ENCODE measurements at regions of chr10 and their contacts with region 1.

Region 1: DNA sequence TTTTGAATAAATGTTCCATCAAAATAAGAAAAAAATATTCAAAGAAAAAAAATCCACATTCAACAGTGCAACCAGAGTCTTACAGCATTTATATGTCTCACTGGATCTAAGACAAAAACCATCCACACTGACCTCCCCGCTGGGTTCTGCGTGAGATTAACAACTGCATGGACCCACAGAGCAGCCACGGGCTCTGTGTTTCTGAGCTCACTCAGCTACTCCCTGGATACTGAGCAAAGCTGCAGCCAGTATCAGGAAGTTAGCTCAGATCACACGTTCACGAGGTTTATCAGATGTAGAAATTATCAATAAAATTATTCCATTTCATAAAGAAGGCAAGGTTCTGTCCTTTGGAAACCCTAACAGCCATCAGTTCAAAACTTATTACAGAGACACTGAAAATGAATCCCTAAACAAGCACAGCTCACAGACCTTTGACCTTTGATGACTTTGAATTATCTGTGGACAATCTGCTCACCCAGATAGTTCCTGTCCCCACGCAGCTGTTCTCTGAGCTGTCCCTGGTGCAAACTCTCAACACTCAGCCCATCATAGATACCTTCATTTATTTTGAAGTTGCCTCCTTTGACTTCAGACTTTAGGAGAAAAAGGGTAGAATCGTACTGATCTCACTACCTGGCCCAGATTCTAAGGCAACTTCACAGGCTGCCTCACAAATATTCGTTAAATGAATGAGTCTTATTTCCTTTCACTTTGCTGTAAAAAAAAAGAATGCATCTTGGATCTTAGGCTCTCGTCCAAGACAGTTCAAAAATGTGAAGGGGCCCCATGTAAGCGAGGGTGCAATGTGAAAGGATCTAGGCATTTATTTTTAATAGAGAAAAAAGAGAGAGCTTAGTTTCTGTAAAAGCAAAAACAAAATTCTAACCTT is 67.7 kb upstream of the SVIL start:
- DNase-seq: peak in 3 of 5 donors; percentile 6 to 17 (median 14)
- H3K4me3 ChIP-seq: no peak overlapping the region
- H3K4me3 Mint-ChIP-seq: peak overlapping the region; percentile 32 to 88 (median 68)
- H3K27ac ChIP-seq: peak overlapping the region; percentile 43
- H3K27ac Mint-ChIP-seq: peak overlapping the region; percentile 58 to 94 (median 81)
- H3K4me1 ChIP-seq: peaks cover 17% of the 10 kb centered on the region
- H3K4me1 Mint-ChIP-seq: peaks cover 36 to 68% (median 46%) of the 10 kb centered on the region in 4 donors
- H3K27me3 ChIP-seq: no peaks in the 10 kb centered on the region
- H3K27me3 Mint-ChIP-seq: no peaks in the 10 kb centered on the region

Region 2: DNA sequence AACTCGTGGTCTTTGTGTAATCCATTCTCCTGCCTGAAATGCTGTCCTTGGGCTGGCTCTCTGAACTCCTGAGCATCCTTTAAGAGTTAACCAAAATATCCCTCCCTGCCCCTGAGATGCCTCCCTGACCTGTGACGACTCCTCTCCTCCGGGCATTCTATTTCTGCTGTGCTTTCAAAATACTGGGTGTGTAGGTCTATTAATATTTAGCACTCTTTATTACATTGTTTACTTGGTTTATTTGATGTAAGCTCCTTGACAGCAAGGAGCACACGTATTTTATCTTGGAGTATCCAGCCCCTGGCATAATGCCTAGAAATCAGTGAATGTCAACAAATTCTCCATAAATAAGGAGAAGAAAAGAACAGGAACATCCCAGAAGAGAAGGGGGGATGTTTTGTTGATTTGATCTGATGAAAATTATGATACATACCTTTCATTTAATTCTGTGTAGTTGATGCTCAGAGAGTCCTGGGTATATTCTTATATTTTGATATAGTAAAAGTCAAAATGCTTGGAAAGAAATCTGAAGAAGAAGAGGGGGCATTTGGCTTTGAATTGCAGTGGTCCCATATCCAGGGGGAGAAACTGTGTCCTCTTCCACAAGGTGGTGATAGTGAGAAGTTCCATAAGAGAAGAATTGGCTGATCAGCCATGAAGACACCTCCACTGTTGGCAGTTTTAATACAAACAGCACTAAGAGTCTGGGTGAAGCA is 1291.9 kb before region 1 on chr10:
- CTCF ChIA-PET with region 1: no interaction called
- POLR2A ChIA-PET with region 1: no interaction called
- intact Hi-C with region 1: no loop called
- DNase-seq: no peak
- H3K4me3 ChIP-seq: no peak overlapping the region
- H3K4me3 Mint-ChIP-seq: no peak overlapping the region
- H3K27ac ChIP-seq: no peak overlapping the region
- H3K27ac Mint-ChIP-seq: no peak overlapping the region
- H3K4me1 ChIP-seq: no peaks in the 10 kb centered on the region
- H3K4me1 Mint-ChIP-seq: peaks cover 0 to 4% (median 0%) of the 10 kb centered on the region in 4 donors
- H3K27me3 ChIP-seq: no peaks in the 10 kb centered on the region
- H3K27me3 Mint-ChIP-seq: peaks cover 18 to 19% of the 10 kb centered on the region in 2 donors

Region 3: GRCh38 chr10:29635711-29636144 is 66.8 kb before region 1 on chr10:
- CTCF ChIA-PET with region 1: no interaction called
- POLR2A ChIA-PET with region 1: no interaction called
- intact Hi-C with region 1: no loop called
- DNase-seq: peak; percentile 43 to 60 (median 55)
- H3K4me3 ChIP-seq: peak overlapping the region in 1 of 2 donors; percentile 11
- H3K4me3 Mint-ChIP-seq: peak overlapping the region; percentile 68 to 83 (median 74)
- H3K27ac ChIP-seq: peak overlapping the region; percentile 67
- H3K27ac Mint-ChIP-seq: peak overlapping the region; percentile 82 to 97 (median 96)
- H3K4me1 ChIP-seq: peaks cover 46% of the 10 kb centered on the region
- H3K4me1 Mint-ChIP-seq: peaks cover 33 to 66% (median 54%) of the 10 kb centered on the region in 4 donors
- H3K27me3 ChIP-seq: no peaks in the 10 kb centered on the region
- H3K27me3 Mint-ChIP-seq: no peaks in the 10 kb centered on the region

Region 4: GRCh38 chr10:29689001-29689400 is 13.5 kb before region 1 on chr10:
- CTCF ChIA-PET with region 1: interaction called, 5 read pairs
- POLR2A ChIA-PET with region 1: interaction called, 10 read pairs
- intact Hi-C with region 1: no loop called
- DNase-seq: peak in 1 of 5 donors; percentile 56
- H3K4me3 ChIP-seq: no peak overlapping the region
- H3K4me3 Mint-ChIP-seq: peak overlapping the region in 5 of 8 donors; percentile 43 to 59 (median 51)
- H3K27ac ChIP-seq: no peak overlapping the region
- H3K27ac Mint-ChIP-seq: peak overlapping the region in 6 of 7 donors; percentile 61 to 89 (median 76)
- H3K4me1 ChIP-seq: peaks cover 26% of the 10 kb centered on the region
- H3K4me1 Mint-ChIP-seq: peaks cover 31 to 78% (median 55%) of the 10 kb centered on the region in 4 donors
- H3K27me3 ChIP-seq: no peaks in the 10 kb centered on the region
- H3K27me3 Mint-ChIP-seq: no peaks in the 10 kb centered on the region

Measured in CD4-positive, alpha-beta memory T cell (primary cell).